Aorta (tissue), 5 donors: ENCODE measurements at regions of chr7 and their contacts with region 1.

Region 1: GRCh38 chr7:102996957-102997356 is 77.6 kb downstream of the FBXL13 start:
- DNase-seq: no peak
- ATAC-seq: no peak
- H3K4me3 ChIP-seq: no peak overlapping the region
- H3K27ac ChIP-seq: no peak overlapping the region
- H3K4me1 ChIP-seq: peaks cover 0 to 7% of the 10 kb centered on the region in 2 donors
- H3K27me3 ChIP-seq: no peaks in the 10 kb centered on the region

Region 2: GRCh38 chr7:103065667-103066066 is 68.7 kb after region 1 on chr7:
- intact Hi-C with region 1: loop called in 1 of 2 experiments (anchors 5 kb)
- DNase-seq: peak; percentile 58 to 75
- ATAC-seq: peak; percentile 42
- H3K4me3 ChIP-seq: no peak overlapping the region
- H3K27ac ChIP-seq: no peak overlapping the region
- H3K4me1 ChIP-seq: no peaks in the 10 kb centered on the region
- H3K27me3 ChIP-seq: no peaks in the 10 kb centered on the region